GM13977 (cell line): ENCODE measurements at regions of chr10 and their contacts with region 1.

Region 1: GRCh38 chr10:47024399-47025252 is 113.4 kb downstream of the PTPN20 start:
- DNase-seq: peak; percentile 85
- CTCF ChIP-seq: peak; percentile 94

Region 2: GRCh38 chr10:47311932-47312662 is 287.5 kb after region 1 on chr10:
- in situ Hi-C with region 1: loop called (anchors 10 kb)
- DNase-seq: peak; percentile 85
- CTCF ChIP-seq: peak; percentile 96